ENCODE measurements at regions of chr11 and their contacts with region 1.

Region 1: GRCh38 chr11:57792060-57792541 is 30.5 kb downstream of the CTNND1 start:
- DNase-seq: peak; percentile 70
- H3K4me3 ChIP-seq: peak overlapping the region; percentile 41 to 62 (median 46)
- H3K27ac ChIP-seq: peak overlapping the region; percentile 71
- H3K4me1 ChIP-seq: peaks cover 49% of the 10 kb centered on the region
- H3K27me3 ChIP-seq: no peaks in the 10 kb centered on the region
- CTCF ChIP-seq: no peak

Region 2: DNA sequence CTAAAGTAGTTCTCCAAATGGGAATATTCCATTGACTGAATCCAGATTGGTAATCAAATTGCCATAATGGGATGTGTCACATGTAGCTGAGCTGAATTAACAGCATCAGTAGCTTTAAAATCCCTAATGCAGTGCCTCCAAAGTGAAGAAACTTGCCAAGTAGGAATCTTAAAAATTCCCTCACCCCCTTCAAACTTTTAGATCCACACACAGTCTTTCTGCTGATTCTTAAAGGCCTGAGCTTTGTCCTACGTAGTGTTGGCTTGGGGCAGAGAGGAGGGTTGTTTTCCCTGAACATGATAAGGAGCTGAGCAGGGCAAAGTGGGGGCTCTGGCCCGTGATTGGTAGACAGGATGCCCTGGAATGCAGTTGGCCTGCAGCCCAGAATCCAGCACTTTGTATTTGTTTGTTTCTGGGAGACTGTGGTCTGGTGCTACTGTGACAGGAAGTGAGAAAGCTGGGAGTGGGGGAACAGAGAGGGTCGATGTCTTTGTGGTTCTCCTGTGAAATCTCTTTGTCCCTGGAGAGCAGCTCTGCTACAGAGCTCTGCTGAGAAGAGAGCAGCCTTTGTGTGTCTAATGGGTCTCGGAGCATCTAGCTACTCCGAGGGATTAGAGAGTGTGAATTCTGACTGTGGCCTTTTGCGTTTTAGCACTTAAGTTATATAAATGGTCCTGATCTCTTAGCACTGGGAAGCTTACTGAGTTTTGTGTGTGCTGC is 13.6 kb before region 1 on chr11:
- CTCF ChIA-PET with region 1: interaction called, 5 read pairs
- dilution Hi-C with region 1: no loop called
- in situ Hi-C with region 1: no loop called
- intact Hi-C with region 1: loop called (anchors 1 kb)
- DNase-seq: peak; percentile 86
- H3K4me3 ChIP-seq: peak overlapping the region in 2 of 3 experiments; percentile 9 to 13
- H3K27ac ChIP-seq: peak overlapping the region; percentile 89
- H3K4me1 ChIP-seq: peaks cover 78% of the 10 kb centered on the region
- H3K27me3 ChIP-seq: no peaks in the 10 kb centered on the region
- CTCF ChIP-seq: no peak

Region 3: GRCh38 chr11:57815476-57815875 is 23.4 kb after region 1 on chr11:
- CTCF ChIA-PET with region 1: interaction called, 12 read pairs
- dilution Hi-C with region 1: no loop called
- in situ Hi-C with region 1: no loop called
- intact Hi-C with region 1: no loop called
- DNase-seq: no peak
- H3K4me3 ChIP-seq: no peak overlapping the region
- H3K27ac ChIP-seq: no peak overlapping the region
- H3K4me1 ChIP-seq: no peaks in the 10 kb centered on the region
- H3K27me3 ChIP-seq: no peaks in the 10 kb centered on the region
- CTCF ChIP-seq: no peak

Measured in mammary epithelial cell (primary cell).